Activated T-helper 2 cell treated with anti-CD3 and anti-CD28 coated beads, Interferon-gamma antibody, Interleukin-2, Interleukin-4, amounts not matched to agents 10 μg/mL and 5 μg/mL and 100 μg/mL, durations not matched to agents 14 hours and 24 hours and 36 hours (primary cell): ENCODE measurements at regions of chr5 and their contacts with region 1.

Region 1: DNA sequence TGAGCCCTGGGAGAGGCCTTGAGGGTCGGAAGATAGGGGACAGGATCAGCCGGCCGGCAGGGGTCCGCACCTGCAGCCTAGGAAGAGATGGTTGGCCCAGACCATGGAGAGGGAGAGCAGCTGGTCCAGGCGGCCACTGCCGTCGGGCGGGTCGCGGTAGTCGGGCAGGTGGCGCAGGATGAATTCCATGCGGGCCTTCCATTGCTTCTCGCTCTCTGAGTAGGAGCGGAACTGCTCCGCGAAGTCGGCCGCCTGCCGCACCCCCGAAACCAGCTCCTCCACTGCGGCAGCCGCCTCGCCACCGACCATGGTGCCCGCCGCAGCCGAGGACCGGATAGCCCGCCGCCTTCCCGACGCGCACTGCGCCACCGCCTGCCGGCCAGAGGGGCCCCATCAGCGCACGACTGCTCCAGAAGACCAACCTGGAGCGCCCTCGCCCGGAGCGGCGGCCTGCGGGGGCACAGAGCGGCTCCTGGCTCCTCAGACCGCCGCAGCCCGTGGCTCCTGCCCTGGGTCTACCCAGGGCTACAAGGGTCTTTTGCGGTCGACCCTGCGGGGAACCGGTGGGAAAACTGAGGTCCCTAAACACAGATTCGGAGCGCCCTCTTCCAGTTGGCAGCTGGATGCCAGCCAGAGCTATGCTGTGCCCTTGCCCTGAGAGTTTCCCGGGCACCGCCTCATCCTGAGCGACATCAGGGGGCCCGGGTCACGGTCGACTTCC is at the start of gene CDKN2AIPNL:
- DNase-seq: peak; percentile 86
- H3K4me3 Mint-ChIP-seq: peak within 1 kb of the TSS; percentile 92
- H3K27ac Mint-ChIP-seq: peak within 1 kb of the TSS; percentile 80
- H3K4me1 Mint-ChIP-seq: peaks cover 25% of the 10 kb centered on the region
- H3K27me3 Mint-ChIP-seq: no peaks in the 10 kb centered on the region
- total RNA-seq, gene CDKN2AIPNL: 34.5 and 37.8 TPM in 2 replicates

Region 2: GRCh38 chr5:134394932-134395331 is 16.8 kb before region 1 on chr5:
- intact Hi-C with region 1: no loop called
- DNase-seq: no peak
- H3K4me3 Mint-ChIP-seq: no peak overlapping the region
- H3K27ac Mint-ChIP-seq: no peak overlapping the region
- H3K4me1 Mint-ChIP-seq: peaks cover 6% of the 10 kb centered on the region
- H3K27me3 Mint-ChIP-seq: no peaks in the 10 kb centered on the region

Region 3: GRCh38 chr5:134436523-134437339 is 25.0 kb after region 1 on chr5:
- intact Hi-C with region 1: loop called (anchors 2 kb)
- DNase-seq: peak; percentile 62
- H3K4me3 Mint-ChIP-seq: no peak overlapping the region
- H3K27ac Mint-ChIP-seq: peak overlapping the region; percentile 68
- H3K4me1 Mint-ChIP-seq: peaks cover 19% of the 10 kb centered on the region
- H3K27me3 Mint-ChIP-seq: no peaks in the 10 kb centered on the region

Region 4: GRCh38 chr5:134451936-134452505 is 40.3 kb after region 1 on chr5:
- intact Hi-C with region 1: no loop called
- DNase-seq: no peak
- H3K4me3 Mint-ChIP-seq: no peak overlapping the region
- H3K27ac Mint-ChIP-seq: no peak overlapping the region
- H3K4me1 Mint-ChIP-seq: peaks cover 3% of the 10 kb centered on the region
- H3K27me3 Mint-ChIP-seq: peaks cover 2% of the 10 kb centered on the region

Region 5: GRCh38 chr5:134503088-134503946 is 91.6 kb after region 1 on chr5:
- intact Hi-C with region 1: loop called (anchors 1 kb)
- DNase-seq: peak; percentile 67
- H3K4me3 Mint-ChIP-seq: peak overlapping the region; percentile 64
- H3K27ac Mint-ChIP-seq: peak overlapping the region; percentile 99
- H3K4me1 Mint-ChIP-seq: peaks cover 40% of the 10 kb centered on the region
- H3K27me3 Mint-ChIP-seq: no peaks in the 10 kb centered on the region

Region 6: DNA sequence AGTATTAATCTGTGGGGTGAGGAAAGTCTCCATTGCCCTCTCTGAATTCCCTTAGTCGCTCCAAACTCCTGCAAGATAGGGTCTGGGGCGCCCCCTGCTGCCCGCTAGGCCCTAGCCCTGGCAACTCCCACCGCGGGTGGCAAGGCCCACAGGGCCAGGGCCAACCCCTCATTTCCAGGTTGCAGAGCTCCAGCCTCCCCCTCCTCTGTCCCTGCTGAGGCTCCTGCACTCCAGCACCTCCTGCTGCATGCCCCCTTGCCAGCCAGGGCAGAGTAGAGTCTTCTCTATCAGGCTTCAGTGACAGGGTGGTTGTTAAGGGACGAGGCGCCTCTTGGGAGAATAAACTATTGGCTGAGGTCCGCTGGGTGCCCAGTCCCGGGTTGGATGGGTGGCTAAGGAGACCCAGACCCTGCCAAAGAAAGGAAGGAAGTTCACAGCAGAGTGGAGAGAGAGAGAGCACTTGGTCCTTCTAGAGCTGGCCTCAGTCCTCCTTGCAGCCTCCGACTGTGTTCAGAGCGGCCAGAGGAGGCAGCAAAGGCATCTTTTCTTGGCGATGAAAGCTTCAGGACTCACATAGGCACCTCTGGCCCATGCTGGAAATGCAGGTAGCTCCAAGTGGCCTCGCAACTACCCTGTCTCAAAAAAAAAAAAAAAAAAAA is 175.3 kb after region 1 on chr5:
- intact Hi-C with region 1: loop called (anchors 2 kb)
- DNase-seq: peak; percentile 74
- H3K4me3 Mint-ChIP-seq: no peak overlapping the region
- H3K27ac Mint-ChIP-seq: peak overlapping the region; percentile 25
- H3K4me1 Mint-ChIP-seq: peaks cover 15% of the 10 kb centered on the region
- H3K27me3 Mint-ChIP-seq: no peaks in the 10 kb centered on the region

Region 7: GRCh38 chr5:134758504-134759341 is 347.0 kb after region 1 on chr5 and contains the start of gene DDX46:
- intact Hi-C with region 1: loop called (anchors 2 kb)
- DNase-seq: peak; percentile 94
- H3K4me3 Mint-ChIP-seq: peak within 1 kb of the TSS; percentile 100
- H3K27ac Mint-ChIP-seq: peak within 1 kb of the TSS; percentile 97
- H3K4me1 Mint-ChIP-seq: peaks cover 24% of the 10 kb centered on the region
- H3K27me3 Mint-ChIP-seq: no peaks in the 10 kb centered on the region
- total RNA-seq, gene DDX46: 75.2 and 83.9 TPM in 2 replicates